Activated CD8-positive, alpha-beta memory T cell treated with anti-CD3 and anti-CD28 coated beads, Interleukin-2, amount 10 ng/mL, durations not matched to agents 7 days and 5 days (primary cell): ENCODE measurements at regions of chr10 and their contacts with region 1.

Region 1: GRCh38 chr10:130127364-130128061 is 8.7 kb upstream of the GLRX3 start:
- DNase-seq: peak; percentile 67
- ATAC-seq: peak; percentile 82
- H3K4me3 Mint-ChIP-seq: no peak overlapping the region
- H3K27ac Mint-ChIP-seq: no peak overlapping the region
- H3K4me1 Mint-ChIP-seq: peaks cover 10% of the 10 kb centered on the region
- H3K27me3 Mint-ChIP-seq: peaks cover 41% of the 10 kb centered on the region

Region 2: GRCh38 chr10:129888784-129889616 is 238.5 kb before region 1 on chr10:
- CTCF ChIA-PET with region 1: interaction called, 10 read pairs
- DNase-seq: peak; percentile 52
- ATAC-seq: peak; percentile 45
- H3K4me3 Mint-ChIP-seq: no peak overlapping the region
- H3K27ac Mint-ChIP-seq: no peak overlapping the region
- H3K4me1 Mint-ChIP-seq: no peaks in the 10 kb centered on the region
- H3K27me3 Mint-ChIP-seq: no peaks in the 10 kb centered on the region